Panc1 (cell line): ENCODE measurements at regions of chr17 and their contacts with region 1.

Region 1: GRCh38 chr17:74935585-74936469 is at the start of gene OTOP3:
- DNase-seq: no peak
- ATAC-seq: peak; percentile 60
- H3K4me3 ChIP-seq: no peak within 1 kb of the TSS
- H3K27ac ChIP-seq: no peak within 1 kb of the TSS
- H3K4me1 ChIP-seq: no peaks in the 10 kb centered on the region
- H3K27me3 ChIP-seq: peaks cover 13% of the 10 kb centered on the region; the same call in 1 of the 2 replicates
- CTCF ChIP-seq: no peak
- total RNA-seq, gene OTOP3: not detected

Region 2: DNA sequence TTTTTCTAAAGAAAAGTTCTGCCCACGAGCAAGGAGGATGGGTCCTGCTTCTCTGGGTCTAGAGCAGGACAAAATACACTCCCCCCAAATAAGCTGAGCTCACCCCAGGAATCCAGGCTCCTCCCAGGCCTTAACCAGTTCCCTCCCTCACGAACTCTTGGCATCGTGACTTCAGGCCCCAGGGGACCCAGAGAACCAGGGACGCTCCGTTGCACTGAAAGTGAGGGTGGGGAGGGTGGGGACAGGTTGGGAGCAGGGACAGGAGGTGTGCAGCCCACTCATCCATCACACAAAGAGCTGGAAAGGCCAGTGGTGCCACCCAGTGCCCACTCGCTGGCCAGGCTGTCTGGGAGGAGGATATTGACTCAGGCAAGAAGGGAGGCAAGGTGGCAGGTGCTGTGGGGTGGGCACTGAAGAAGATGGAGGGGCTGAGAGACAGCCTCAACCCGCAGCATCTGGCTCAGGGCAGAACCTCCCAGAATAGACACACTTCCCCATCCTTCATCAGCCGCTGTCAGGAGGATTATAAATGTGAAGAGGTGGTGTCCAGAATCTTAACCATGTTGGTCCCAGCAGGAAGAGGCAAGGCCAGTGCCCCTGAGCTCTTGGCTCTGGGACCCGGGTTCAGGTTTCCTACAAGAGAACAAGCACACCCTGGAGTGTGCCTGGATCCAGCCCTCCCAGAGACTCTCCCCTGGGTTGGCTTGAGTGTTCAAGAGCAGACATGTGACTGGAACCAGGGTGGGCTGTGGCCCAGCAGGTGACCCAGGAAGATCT is 800.2 kb before region 1 on chr17:
- CTCF ChIA-PET with region 1: no interaction called
- POLR2A ChIA-PET with region 1: no interaction called
- in situ Hi-C with region 1: no loop called
- intact Hi-C with region 1: no loop called
- DNase-seq: no peak
- ATAC-seq: no peak
- H3K4me3 ChIP-seq: no peak overlapping the region
- H3K27ac ChIP-seq: no peak overlapping the region
- H3K4me1 ChIP-seq: no peaks in the 10 kb centered on the region
- H3K27me3 ChIP-seq: peaks cover 28% of the 10 kb centered on the region
- CTCF ChIP-seq: no peak

Region 3: GRCh38 chr17:74883041-74883745 is 52.6 kb before region 1 on chr17:
- CTCF ChIA-PET with region 1: no interaction called
- POLR2A ChIA-PET with region 1: no interaction called
- in situ Hi-C with region 1: no loop called
- intact Hi-C with region 1: no loop called
- DNase-seq: no peak
- ATAC-seq: no peak
- H3K4me3 ChIP-seq: no peak overlapping the region
- H3K27ac ChIP-seq: no peak overlapping the region
- H3K4me1 ChIP-seq: no peaks in the 10 kb centered on the region
- H3K27me3 ChIP-seq: no peaks in the 10 kb centered on the region; the same call in 1 of the 2 replicates
- CTCF ChIP-seq: no peak

Region 4: DNA sequence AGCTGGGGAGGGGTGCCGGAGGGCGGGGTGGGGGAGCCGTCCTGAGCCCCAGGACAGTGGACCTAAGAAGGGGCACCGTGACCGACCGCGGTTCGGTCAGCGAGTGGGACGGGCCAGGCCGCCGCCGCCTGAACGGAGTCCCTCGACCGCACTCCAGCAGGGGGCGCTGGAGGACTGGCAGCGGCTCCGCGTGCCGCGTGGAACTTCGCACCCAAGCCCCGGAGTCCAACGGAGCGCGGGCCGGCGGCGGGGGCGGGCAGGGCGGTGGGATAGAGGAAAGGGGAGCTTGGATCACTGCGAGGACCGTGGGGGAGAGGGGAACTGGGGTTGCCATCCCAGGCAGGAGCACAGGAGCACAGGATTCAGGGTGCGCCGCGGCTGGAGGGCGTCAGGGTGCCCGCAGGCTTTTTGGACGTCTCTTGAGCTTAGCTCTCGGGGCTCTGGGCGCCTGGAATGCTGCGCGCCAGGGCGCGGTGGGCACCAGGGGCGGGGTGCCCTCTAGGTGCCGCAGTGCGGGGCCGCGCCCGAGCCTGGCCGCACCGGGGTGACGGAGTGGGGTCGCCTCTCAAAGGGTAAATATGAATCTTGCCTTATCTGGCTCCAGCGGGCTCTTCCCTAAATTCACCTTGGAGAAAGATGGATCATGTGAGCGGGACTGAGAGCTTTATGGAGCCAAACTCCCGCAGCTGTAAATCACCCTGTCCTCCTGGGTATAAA is 12.1 kb before region 1 on chr17:
- CTCF ChIA-PET with region 1: interaction called, 15 read pairs
- POLR2A ChIA-PET with region 1: no interaction called
- in situ Hi-C with region 1: no loop called
- intact Hi-C with region 1: no loop called
- DNase-seq: no peak
- ATAC-seq: peak; percentile 78
- H3K4me3 ChIP-seq: peak overlapping the region; percentile 27 to 50
- H3K27ac ChIP-seq: no peak overlapping the region
- H3K4me1 ChIP-seq: peaks cover 4% of the 10 kb centered on the region; the same call in 1 of the 2 replicates
- H3K27me3 ChIP-seq: peaks cover 18% of the 10 kb centered on the region
- CTCF ChIP-seq: peak; percentile 99

Region 5: GRCh38 chr17:75006653-75007052 is 70.8 kb after region 1 on chr17:
- CTCF ChIA-PET with region 1: no interaction called
- POLR2A ChIA-PET with region 1: no interaction called
- in situ Hi-C with region 1: no loop called
- intact Hi-C with region 1: no loop called
- DNase-seq: no peak
- ATAC-seq: no peak
- H3K4me3 ChIP-seq: no peak overlapping the region
- H3K27ac ChIP-seq: no peak overlapping the region
- H3K4me1 ChIP-seq: peaks cover 7% of the 10 kb centered on the region
- H3K27me3 ChIP-seq: no peaks in the 10 kb centered on the region
- CTCF ChIP-seq: no peak

Region 6: DNA sequence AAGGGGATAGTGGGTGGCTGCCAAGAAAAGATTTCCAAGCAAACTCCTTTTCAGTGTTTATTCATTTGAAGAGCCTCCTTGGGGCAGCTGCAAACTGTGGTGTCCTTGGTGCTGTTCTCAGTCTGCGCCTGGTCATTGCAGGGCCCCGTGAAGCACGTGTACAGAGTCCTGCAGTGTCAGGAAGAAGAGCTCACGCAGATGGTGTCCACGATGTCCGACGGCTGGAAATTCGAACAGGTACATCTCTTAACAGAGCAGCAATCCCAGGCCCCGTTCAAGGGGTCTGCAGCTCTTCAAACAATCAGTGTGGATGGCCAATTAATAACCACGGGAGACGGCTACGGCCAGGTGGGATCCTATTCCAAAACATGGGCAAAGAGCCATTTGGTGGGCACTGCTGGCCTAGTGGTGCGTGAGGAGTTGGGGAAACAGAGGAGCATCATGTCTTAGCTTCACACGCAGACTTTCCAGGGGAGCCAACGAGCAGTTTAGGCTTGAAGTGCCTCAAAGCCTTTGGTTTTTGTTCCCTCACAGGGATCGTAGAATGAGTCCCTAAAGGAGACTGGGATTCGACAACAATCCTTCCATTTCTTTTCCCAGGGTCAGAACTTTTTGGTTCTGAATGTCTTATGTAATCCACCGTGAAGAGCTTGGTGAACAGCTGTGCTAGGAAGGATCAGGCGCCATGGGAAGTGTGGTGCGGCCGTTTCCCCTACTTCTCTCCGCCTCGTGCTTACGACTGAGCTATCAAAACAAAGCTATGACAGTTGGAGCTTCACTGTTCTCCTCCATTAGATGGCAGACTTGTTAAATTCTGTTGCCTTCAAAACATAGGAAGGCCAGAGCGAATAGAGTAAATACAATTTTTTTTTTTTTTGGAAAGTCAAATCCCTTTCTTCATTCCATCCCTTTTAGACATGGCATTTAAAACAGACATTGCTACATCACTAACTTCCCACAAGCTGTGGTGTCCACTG is 123.8 kb after region 1 on chr17:
- CTCF ChIA-PET with region 1: interaction called, 12 read pairs
- POLR2A ChIA-PET with region 1: no interaction called
- in situ Hi-C with region 1: no loop called
- intact Hi-C with region 1: no loop called
- DNase-seq: no peak
- ATAC-seq: peak; percentile 78
- H3K4me3 ChIP-seq: no peak overlapping the region
- H3K27ac ChIP-seq: no peak overlapping the region
- H3K4me1 ChIP-seq: no peaks in the 10 kb centered on the region
- H3K27me3 ChIP-seq: no peaks in the 10 kb centered on the region
- CTCF ChIP-seq: no peak